B cell (primary cell): ENCODE measurements at regions of chr9 and their contacts with region 1.

Region 1: GRCh38 chr9:113578882-113579282 is 115.4 kb downstream of the RGS3 start:
- DNase-seq: peak; percentile 76
- ATAC-seq: peak; percentile 46
- H3K4me3 ChIP-seq: peak overlapping the region in 1 of 5 experiments; percentile 9
- H3K4me3 Mint-ChIP-seq: peak overlapping the region; percentile 86
- H3K27ac ChIP-seq: peak overlapping the region; percentile 71 to 85
- H3K27ac Mint-ChIP-seq: peak overlapping the region; percentile 96
- H3K4me1 ChIP-seq: peaks cover 51 to 69% of the 10 kb centered on the region in 2 donors
- H3K4me1 Mint-ChIP-seq: peaks cover 72% of the 10 kb centered on the region
- H3K27me3 ChIP-seq: peaks cover 0 to 2% (median 0%) of the 10 kb centered on the region in 4 experiments
- H3K27me3 Mint-ChIP-seq: no peaks in the 10 kb centered on the region
- CTCF ChIP-seq: no peak

Region 2: DNA sequence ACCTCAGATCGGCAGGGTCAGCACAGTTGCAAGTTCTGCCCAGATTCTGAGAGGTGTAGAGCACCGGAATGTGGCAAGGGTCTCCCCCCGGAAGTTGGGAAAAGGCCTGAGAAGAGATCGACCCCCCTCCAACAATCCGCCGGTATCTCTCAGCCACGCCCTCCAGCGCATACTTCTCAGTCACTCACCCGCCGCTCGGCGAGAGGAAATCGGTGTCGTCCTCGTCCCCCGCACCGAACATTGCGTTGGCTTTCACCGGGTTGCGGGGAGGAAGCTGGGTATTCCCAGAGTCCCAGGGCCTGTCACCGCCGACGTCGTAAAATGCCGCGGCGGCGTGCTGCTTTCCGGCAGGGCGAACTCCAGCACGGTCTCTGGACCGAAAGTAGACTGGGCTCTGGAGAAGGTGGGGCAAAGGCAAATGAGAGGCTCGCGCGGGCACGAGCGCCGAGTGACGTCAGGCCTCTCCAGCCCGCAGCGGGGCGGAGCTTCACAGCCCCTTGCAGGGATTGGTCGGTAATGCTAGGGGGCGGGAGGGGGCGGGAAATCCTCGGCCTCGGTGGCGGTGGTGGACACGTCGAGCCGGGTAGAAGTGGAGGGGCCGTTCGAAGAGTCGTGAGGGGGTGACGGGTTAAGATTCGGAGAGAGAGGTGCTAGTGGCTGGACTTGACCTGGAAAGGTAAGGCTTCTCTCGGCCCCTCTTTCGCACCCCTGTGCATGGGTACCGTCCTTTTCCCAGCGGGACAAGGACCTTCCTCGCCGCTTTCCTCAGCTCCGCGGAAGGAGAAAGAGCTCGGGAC is 357.7 kb before region 1 on chr9 and contains the starts of genes FKBP15 and SLC31A1:
- CTCF ChIA-PET with region 1: interaction called, 3 read pairs
- POLR2A ChIA-PET with region 1: no interaction called
- intact Hi-C with region 1: loop called (anchors 1 kb)
- DNase-seq: peak; percentile 98
- ATAC-seq: peak; percentile 98
- H3K4me3 ChIP-seq: peak within 1 kb of the TSS; percentile 77 to 97 (median 94)
- H3K4me3 Mint-ChIP-seq: peak within 1 kb of the TSS; percentile 95
- H3K27ac ChIP-seq: peak within 1 kb of the TSS; percentile 59 to 84
- H3K27ac Mint-ChIP-seq: peak within 1 kb of the TSS; percentile 95
- H3K4me1 ChIP-seq: peaks cover 33 to 35% of the 10 kb centered on the region in 2 donors
- H3K4me1 Mint-ChIP-seq: peaks cover 48% of the 10 kb centered on the region
- H3K27me3 ChIP-seq: no peaks in the 10 kb centered on the region
- H3K27me3 Mint-ChIP-seq: no peaks in the 10 kb centered on the region
- CTCF ChIP-seq: no peak
- total RNA-seq, gene FKBP15: 40.6 and 41.2 TPM in 2 replicates
- total RNA-seq, gene SLC31A1: 3.2 and 3.5 TPM in 2 replicates

Region 3: GRCh38 chr9:113340017-113340699 is 238.7 kb before region 1 on chr9 and contains the start of gene WDR31:
- CTCF ChIA-PET with region 1: interaction called, 6 read pairs
- POLR2A ChIA-PET with region 1: no interaction called
- intact Hi-C with region 1: loop called (anchors 1 kb)
- DNase-seq: peak; percentile 84
- ATAC-seq: peak; percentile 97
- H3K4me3 ChIP-seq: peak within 1 kb of the TSS; percentile 42 to 85 (median 73)
- H3K4me3 Mint-ChIP-seq: peak within 1 kb of the TSS; percentile 90
- H3K27ac ChIP-seq: peak within 1 kb of the TSS in 1 of 2 donors; percentile 41
- H3K27ac Mint-ChIP-seq: peak within 1 kb of the TSS; percentile 84
- H3K4me1 ChIP-seq: peaks cover 8 to 12% of the 10 kb centered on the region in 2 donors
- H3K4me1 Mint-ChIP-seq: peaks cover 16% of the 10 kb centered on the region
- H3K27me3 ChIP-seq: no peaks in the 10 kb centered on the region
- H3K27me3 Mint-ChIP-seq: peaks cover 8% of the 10 kb centered on the region
- CTCF ChIP-seq: no peak
- total RNA-seq, gene WDR31: 0.62 and 1.0 TPM in 2 replicates

Region 4: DNA sequence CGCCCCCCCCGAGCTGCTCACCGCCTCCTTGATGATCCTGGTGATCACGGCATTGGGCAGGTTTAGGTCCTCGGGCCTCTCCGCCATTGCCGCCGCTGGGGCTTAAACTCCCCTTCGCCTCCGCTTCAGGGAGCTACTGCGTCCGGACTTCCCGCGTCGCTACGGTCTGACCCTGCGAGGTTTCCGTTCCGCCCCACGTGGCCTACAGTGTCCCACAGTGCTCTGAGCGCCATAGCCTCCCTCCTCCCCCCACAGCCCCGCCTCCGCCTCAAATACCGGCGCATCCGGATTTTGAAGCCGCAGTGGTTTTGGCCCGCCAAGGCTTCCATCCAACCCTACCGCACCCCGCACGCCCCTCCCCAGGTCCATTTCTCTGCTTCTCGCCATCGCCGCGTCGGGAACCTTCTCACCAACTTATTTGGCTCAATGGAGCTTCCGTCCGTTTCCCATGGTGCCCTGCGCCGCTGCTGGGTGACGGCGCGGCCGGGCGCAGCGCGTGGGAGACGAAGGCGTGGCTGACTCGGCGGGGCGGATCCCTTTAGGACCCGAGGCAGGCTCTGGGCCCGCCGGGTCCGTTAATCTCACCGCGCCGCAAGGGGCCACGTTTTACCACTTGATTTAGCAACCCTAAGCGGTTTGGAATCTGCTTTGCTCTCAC is 168.5 kb before region 1 on chr9 and contains the starts of genes C9orf43 and POLE3:
- CTCF ChIA-PET with region 1: interaction called, 98 read pairs
- POLR2A ChIA-PET with region 1: interaction called, 15 read pairs
- intact Hi-C with region 1: loop called (anchors 1 kb)
- DNase-seq: peak; percentile 98
- ATAC-seq: peak; percentile 89
- H3K4me3 ChIP-seq: peak within 1 kb of the TSS; percentile 74 to 100 (median 97)
- H3K4me3 Mint-ChIP-seq: peak within 1 kb of the TSS; percentile 100
- H3K27ac ChIP-seq: peak within 1 kb of the TSS; percentile 92 to 97
- H3K27ac Mint-ChIP-seq: peak within 1 kb of the TSS; percentile 100
- H3K4me1 ChIP-seq: peaks cover 8 to 17% of the 10 kb centered on the region in 2 donors
- H3K4me1 Mint-ChIP-seq: peaks cover 32% of the 10 kb centered on the region
- H3K27me3 ChIP-seq: no peaks in the 10 kb centered on the region
- H3K27me3 Mint-ChIP-seq: no peaks in the 10 kb centered on the region
- CTCF ChIP-seq: peak; percentile 14
- total RNA-seq, gene C9orf43: 0.58 and 1.7 TPM in 2 replicates
- total RNA-seq, gene POLE3: 46.1 and 50.3 TPM in 2 replicates

Region 5: DNA sequence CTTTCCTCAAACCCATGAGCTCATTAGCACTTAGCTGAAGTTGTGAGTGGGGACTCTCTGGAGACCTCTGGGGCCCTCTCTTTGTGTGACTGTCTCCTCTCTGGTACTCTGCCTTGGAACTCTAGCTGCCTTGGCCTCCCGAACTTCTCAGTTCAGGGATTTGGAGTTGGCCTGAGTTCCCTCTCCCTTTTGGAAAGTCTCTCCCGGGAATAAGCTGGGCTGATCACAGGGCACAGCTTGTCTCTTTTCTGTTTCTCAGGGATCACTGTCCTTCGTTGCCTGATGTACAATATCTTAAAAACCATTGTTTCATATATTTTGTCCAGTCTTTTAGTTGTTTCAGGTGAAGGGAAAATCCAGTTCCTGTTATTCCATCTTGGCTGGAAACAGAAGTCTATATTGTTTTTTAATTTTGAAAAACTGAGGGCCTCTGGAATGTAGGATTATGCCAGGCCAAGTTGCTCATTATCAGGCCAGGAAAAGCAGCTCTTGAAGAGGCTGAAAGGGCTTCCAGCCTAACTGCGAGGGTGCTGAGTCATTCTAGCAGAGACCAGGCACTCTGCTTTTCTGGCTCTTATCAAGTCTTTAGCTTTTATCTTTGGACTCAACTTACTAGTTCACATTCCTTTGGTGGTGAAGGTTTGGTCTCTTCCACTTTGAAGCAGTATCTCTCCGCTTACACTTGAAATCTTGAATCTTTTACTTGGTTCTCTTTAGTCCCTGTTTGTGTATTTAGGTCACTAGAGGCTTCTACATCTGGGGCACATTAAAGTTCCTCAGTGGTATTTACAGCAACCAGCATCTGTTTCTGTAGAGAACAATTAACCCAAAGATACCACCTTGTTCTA is 123.7 kb before region 1 on chr9:
- CTCF ChIA-PET with region 1: interaction called, 13 read pairs
- POLR2A ChIA-PET with region 1: no interaction called
- intact Hi-C with region 1: no loop called
- DNase-seq: no peak
- ATAC-seq: no peak
- H3K4me3 ChIP-seq: no peak overlapping the region
- H3K4me3 Mint-ChIP-seq: no peak overlapping the region
- H3K27ac ChIP-seq: no peak overlapping the region
- H3K27ac Mint-ChIP-seq: no peak overlapping the region
- H3K4me1 ChIP-seq: no peaks in the 10 kb centered on the region
- H3K4me1 Mint-ChIP-seq: no peaks in the 10 kb centered on the region
- H3K27me3 ChIP-seq: no peaks in the 10 kb centered on the region
- H3K27me3 Mint-ChIP-seq: no peaks in the 10 kb centered on the region
- CTCF ChIP-seq: no peak

Region 6: DNA sequence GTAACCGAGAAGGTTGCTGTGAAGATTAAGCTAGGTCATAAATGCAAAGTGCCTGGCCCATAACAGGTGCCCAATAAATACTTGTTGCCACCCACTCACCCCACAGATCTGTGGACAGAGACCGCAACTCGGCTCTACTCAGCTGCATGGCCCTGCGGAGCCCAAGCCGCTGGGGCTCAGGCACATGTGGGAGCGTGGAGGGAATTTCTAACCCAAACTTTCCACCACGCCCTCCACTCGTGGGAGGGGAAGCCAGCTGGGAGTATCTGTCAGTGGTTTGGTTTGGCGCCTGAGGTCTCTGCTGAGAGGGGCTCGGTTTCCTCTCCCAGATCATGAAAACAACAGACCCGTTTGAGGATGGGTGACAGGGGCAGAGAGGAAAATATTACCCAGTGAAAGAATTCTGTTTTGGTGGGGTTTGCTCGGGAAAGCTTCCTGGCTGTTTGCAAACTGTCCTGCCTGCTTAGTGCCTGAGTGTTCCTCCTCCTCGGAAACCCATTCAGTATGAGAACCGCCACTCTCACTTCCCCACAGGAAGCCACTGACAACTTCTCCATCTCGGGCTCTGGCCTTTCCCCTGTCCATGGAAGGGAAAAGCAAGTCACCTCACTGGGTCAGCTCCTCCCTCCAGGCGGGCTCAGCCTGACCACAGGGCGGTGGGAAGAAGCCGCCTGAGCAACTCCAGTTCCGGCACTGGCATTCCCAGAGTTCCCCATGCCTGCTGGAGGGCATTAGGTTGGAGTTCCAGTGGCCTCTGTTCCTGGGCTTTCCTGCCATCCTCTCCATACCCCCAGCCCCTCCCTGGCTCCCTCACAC is 55.3 kb before region 1 on chr9:
- CTCF ChIA-PET with region 1: interaction called, 14 read pairs
- POLR2A ChIA-PET with region 1: interaction called, 6 read pairs
- intact Hi-C with region 1: loop called (anchors 1 kb)
- DNase-seq: peak; percentile 51
- ATAC-seq: peak; percentile 87
- H3K4me3 ChIP-seq: peak overlapping the region in 3 of 5 experiments; percentile 10 to 22 (median 18)
- H3K4me3 Mint-ChIP-seq: peak overlapping the region; percentile 76
- H3K27ac ChIP-seq: peak overlapping the region in 1 of 2 donors; percentile 16
- H3K27ac Mint-ChIP-seq: peak overlapping the region; percentile 64
- H3K4me1 ChIP-seq: peaks cover 23 to 25% of the 10 kb centered on the region in 2 donors
- H3K4me1 Mint-ChIP-seq: peaks cover 34% of the 10 kb centered on the region
- H3K27me3 ChIP-seq: no peaks in the 10 kb centered on the region
- H3K27me3 Mint-ChIP-seq: no peaks in the 10 kb centered on the region
- CTCF ChIP-seq: no peak

Region 7: GRCh38 chr9:113622600-113623400 is 43.9 kb after region 1 on chr9:
- CTCF ChIA-PET with region 1: no interaction called
- POLR2A ChIA-PET with region 1: interaction called, 4 read pairs
- intact Hi-C with region 1: loop called (anchors 5 kb)
- DNase-seq: peak; percentile 76
- ATAC-seq: peak; percentile 84
- H3K4me3 ChIP-seq: no peak overlapping the region
- H3K4me3 Mint-ChIP-seq: peak overlapping the region; percentile 55
- H3K27ac ChIP-seq: peak overlapping the region in 1 of 2 donors; percentile 17
- H3K27ac Mint-ChIP-seq: peak overlapping the region; percentile 81
- H3K4me1 ChIP-seq: peaks cover 32 to 40% of the 10 kb centered on the region in 2 donors
- H3K4me1 Mint-ChIP-seq: peaks cover 43% of the 10 kb centered on the region
- H3K27me3 ChIP-seq: no peaks in the 10 kb centered on the region
- H3K27me3 Mint-ChIP-seq: no peaks in the 10 kb centered on the region
- CTCF ChIP-seq: no peak

Region 8: GRCh38 chr9:113737517-113738271 is 158.8 kb after region 1 on chr9:
- CTCF ChIA-PET with region 1: no interaction called
- POLR2A ChIA-PET with region 1: no interaction called
- intact Hi-C with region 1: no loop called
- DNase-seq: peak; percentile 40
- ATAC-seq: no peak
- H3K4me3 ChIP-seq: no peak overlapping the region
- H3K4me3 Mint-ChIP-seq: no peak overlapping the region
- H3K27ac ChIP-seq: no peak overlapping the region
- H3K27ac Mint-ChIP-seq: no peak overlapping the region
- H3K4me1 ChIP-seq: no peaks in the 10 kb centered on the region
- H3K4me1 Mint-ChIP-seq: no peaks in the 10 kb centered on the region
- H3K27me3 ChIP-seq: peaks cover 0 to 2% (median 0%) of the 10 kb centered on the region in 4 experiments
- H3K27me3 Mint-ChIP-seq: peaks cover 18% of the 10 kb centered on the region
- CTCF ChIP-seq: peak; percentile 67